H1 (cell line): ENCODE measurements at regions of chr20 and their contacts with region 1.

Region 1: DNA sequence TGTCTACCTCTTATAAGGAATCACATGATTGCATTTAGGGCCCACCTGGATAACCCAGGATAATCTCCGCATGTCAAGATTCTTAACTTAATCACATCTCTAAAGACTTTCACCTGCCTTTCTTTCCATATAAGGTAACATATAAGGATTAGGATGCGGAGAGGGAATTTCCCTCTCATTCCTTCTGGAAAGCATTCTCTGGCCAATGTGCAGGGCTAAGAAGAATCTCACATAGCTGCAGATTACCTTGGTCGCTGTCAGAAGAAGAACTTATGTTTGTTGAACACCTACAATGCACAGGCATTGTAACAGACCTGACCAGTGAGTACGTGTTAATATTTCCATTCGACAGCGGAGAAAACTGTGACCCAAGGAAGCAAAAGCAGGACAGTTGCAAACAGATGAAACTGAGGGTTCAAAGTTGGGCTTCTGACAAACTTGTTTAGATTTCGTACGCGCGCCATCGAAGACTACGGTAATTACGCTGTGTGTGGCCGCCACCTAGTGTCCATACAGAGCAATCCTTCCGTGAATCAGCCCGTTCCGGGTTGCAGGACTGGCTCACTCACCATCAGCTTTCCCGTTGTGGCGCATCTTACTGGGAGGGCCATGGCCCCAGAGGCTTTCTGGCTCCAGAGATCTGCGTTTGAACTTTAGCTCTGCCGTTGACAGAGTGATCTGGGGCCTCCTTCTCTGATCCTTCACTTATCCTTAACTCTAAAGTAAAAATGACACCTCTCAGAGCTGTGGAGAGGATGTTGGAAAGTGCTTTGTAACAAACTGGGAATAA is 9.5 kb downstream of the C20orf202 start:
- DNase-seq: peak; percentile 53 to 77
- H3K4me3 ChIP-seq: no peak overlapping the region
- H3K27ac ChIP-seq: no peak overlapping the region
- H3K4me1 ChIP-seq: peaks cover 0 to 10% (median 0%) of the 10 kb centered on the region in 4 experiments; a peak in 3 of 7 replicates
- H3K27me3 ChIP-seq: 0 out of 7 replicates have a peak, but pooled peaks cover 0 to 3% (median 0%) of the 10 kb centered on the region in 4 experiments
- CTCF ChIP-seq: peak; percentile 80 to 93 (median 85)
- EP300 ChIP-seq: no peak
- POLR2A ChIP-seq: no peak
- RAD21 ChIP-seq: peak; percentile 92

Region 2: DNA sequence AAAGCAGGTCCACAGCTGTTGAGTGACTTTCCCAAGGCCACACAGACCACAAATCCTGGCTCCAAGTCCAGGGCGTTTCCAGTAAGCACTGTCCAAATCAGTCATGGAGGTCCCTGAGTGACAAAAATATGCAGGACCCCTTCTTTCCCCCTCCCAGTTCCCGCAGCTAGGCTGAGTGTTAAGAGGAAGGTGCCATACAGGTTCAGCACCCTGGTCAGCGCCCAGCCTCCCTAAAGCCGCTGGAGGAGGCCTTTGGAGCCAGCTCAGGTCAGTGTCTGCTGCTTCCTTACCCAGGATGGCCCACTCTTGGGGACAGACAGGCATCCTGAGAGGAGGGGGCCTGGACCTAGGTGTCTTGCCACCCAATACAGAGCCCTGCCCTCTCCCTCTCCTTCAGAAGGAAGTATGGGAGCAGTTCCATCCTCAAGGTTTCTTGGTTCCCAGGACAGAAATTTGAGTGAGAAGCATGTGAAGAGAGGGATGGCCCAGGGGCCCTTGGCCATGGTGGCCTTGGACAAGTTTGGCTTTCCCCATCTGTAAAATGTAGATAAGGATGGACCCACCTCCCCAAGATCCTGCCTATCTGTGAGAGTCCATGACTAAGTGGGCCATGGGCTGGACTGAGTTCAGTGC is 41.2 kb before region 1 on chr20:
- CTCF ChIA-PET with region 1: interaction called, 101 read pairs
- POLR2A ChIA-PET with region 1: interaction called, 3 read pairs
- DNase-seq: peak in 1 of 2 experiments; percentile 84
- H3K4me3 ChIP-seq: no peak overlapping the region
- H3K27ac ChIP-seq: no peak overlapping the region
- H3K4me1 ChIP-seq: no peaks in the 10 kb centered on the region
- H3K27me3 ChIP-seq: no peaks in the 10 kb centered on the region
- CTCF ChIP-seq: no peak
- EP300 ChIP-seq: no peak
- POLR2A ChIP-seq: no peak
- RAD21 ChIP-seq: no peak

Region 3: GRCh38 chr20:1177680-1178079 is 35.1 kb before region 1 on chr20:
- CTCF ChIA-PET with region 1: interaction called, 101 read pairs
- POLR2A ChIA-PET with region 1: interaction called, 5 read pairs
- DNase-seq: peak; percentile 29 to 57
- H3K4me3 ChIP-seq: no peak overlapping the region
- H3K27ac ChIP-seq: no peak overlapping the region
- H3K4me1 ChIP-seq: peaks cover 0 to 2% (median 0%) of the 10 kb centered on the region in 4 experiments; a peak in 2 of 7 replicates
- H3K27me3 ChIP-seq: 0 out of 7 replicates have a peak, but pooled peaks cover 0 to 6% (median 0%) of the 10 kb centered on the region in 4 experiments
- CTCF ChIP-seq: peak; percentile 37 to 64 (median 59)
- EP300 ChIP-seq: no peak
- POLR2A ChIP-seq: no peak
- RAD21 ChIP-seq: peak; percentile 60 to 66

Region 4: DNA sequence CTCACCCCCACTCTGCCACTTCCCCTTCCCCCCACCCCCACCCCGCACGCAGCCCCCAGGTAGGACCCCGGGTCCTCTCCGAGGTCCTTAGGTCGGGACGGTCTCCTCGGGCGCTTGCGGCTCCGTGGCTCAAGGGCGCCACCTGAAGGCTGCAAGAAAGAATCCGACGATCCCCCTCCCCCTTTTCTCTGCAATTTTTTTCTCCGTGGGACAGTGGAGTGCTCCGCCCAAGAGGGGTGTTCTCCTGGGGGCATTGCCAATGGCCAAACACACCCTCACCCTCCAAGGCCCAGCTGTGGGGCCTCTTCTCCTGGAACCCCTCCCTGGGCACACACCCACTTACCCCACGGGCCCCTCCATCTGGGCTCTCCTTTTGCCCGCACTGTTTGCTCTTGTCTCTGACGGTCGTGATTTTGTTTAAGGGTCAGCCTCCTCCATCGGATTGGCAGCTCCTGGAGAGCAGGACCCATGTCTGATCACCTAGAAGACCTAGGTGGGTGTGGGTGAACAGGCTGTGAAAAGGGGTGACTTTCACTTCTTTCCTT is 26.9 kb before region 1 on chr20:
- CTCF ChIA-PET with region 1: interaction called, 101 read pairs
- POLR2A ChIA-PET with region 1: no interaction called
- DNase-seq: peak; percentile 21 to 84
- H3K4me3 ChIP-seq: peak overlapping the region in 2 of 4 experiments; percentile 41 to 72; a peak in 4 of 8 replicates
- H3K27ac ChIP-seq: no peak overlapping the region
- H3K4me1 ChIP-seq: peaks cover 0 to 14% (median 8%) of the 10 kb centered on the region in 4 experiments; a peak in 5 of 7 replicates
- H3K27me3 ChIP-seq: peaks cover 8 to 38% (median 26%) of the 10 kb centered on the region in 4 experiments
- CTCF ChIP-seq: peak; percentile 57 to 74 (median 68)
- EP300 ChIP-seq: no peak
- POLR2A ChIP-seq: no peak
- RAD21 ChIP-seq: peak; percentile 63 to 65

Region 5: GRCh38 chr20:1199212-1199873 is 13.5 kb before region 1 on chr20:
- CTCF ChIA-PET with region 1: interaction called, 28 read pairs
- POLR2A ChIA-PET with region 1: interaction called, 4 read pairs
- DNase-seq: no peak
- H3K4me3 ChIP-seq: no peak overlapping the region
- H3K27ac ChIP-seq: no peak overlapping the region
- H3K4me1 ChIP-seq: no peaks in the 10 kb centered on the region
- H3K27me3 ChIP-seq: no peaks in the 10 kb centered on the region; a peak in 1 of 7 replicates
- CTCF ChIP-seq: no peak
- EP300 ChIP-seq: no peak
- POLR2A ChIP-seq: no peak
- RAD21 ChIP-seq: no peak

Region 6: GRCh38 chr20:1374246-1374645 is 161.4 kb after region 1 on chr20:
- CTCF ChIA-PET with region 1: no interaction called
- POLR2A ChIA-PET with region 1: no interaction called
- DNase-seq: peak in 1 of 2 experiments; percentile 11
- H3K4me3 ChIP-seq: no peak overlapping the region
- H3K27ac ChIP-seq: no peak overlapping the region
- H3K4me1 ChIP-seq: peaks cover 0 to 17% (median 2%) of the 10 kb centered on the region in 4 experiments; a peak in 4 of 7 replicates
- H3K27me3 ChIP-seq: no peaks in the 10 kb centered on the region
- CTCF ChIP-seq: no peak
- EP300 ChIP-seq: no peak
- POLR2A ChIP-seq: no peak
- RAD21 ChIP-seq: peak in 1 of 2 experiments; percentile 3; a peak in 1 of 4 replicates